ENCODE measurements at regions of chr19 and their contacts with region 1.

Region 1: DNA sequence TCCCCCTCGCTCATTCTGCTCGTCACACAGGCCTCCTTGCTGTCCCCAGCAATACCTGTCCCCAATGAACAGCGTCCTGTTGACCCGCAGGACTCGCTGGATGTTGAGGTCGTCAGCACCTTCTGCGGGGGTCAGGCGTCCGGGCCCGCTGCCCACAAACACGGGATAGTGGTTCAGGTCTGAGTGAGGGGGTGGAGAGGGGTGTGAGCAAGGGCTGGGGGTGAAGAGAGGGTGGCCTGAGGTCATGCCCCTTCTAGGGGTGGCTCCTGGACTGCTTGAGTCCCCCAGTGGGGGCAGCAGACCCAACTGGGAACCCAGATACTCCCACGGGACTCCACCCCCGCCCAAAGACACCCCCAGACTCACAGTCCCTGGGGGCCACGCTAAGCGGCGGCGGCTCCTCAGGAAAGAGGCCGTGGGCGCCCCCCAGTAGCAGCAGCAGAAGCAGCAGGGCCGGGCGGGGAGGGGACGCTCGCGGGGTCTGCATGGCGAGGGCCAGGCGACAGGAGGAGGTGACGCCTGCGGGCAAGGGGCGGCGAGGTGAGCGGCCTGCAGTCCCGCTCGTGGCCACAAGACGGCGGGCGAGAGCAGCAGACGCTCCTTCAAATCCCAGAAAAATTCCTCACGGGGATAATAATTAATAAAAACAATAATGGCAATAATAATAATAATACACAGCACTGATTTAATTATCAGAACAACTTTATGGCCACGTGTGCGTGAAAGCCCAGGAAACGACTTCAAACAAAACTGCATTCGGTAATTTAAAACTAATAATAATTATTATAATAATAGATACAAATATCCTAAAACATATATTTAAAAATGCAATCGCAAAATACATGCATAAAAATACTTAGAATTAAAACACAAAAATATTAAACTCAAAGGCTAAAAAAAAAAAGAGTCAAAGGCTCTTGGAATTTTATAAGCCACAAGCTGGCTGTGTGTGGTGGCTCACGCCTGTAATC is 1.2 kb downstream of the SEMA6B start:
- DNase-seq: peak; percentile 83
- H3K4me3 ChIP-seq: peak overlapping the region in 1 of 2 experiments; percentile 43; a peak in 1 of 4 replicates
- H3K27ac ChIP-seq: no peak overlapping the region
- H3K4me1 ChIP-seq: peaks cover 0 to 8% of the 10 kb centered on the region in 2 experiments; a peak in 1 of 4 replicates
- H3K27me3 ChIP-seq: no peaks in the 10 kb centered on the region
- CTCF ChIP-seq: peak; percentile 88
- EP300 ChIP-seq: no peak
- RAD21 ChIP-seq: peak; percentile 57

Region 2: GRCh38 chr19:4505897-4506744 is 52.1 kb before region 1 on chr19:
- CTCF ChIA-PET with region 1: no interaction called
- POLR2A ChIA-PET with region 1: no interaction called
- DNase-seq: no peak
- H3K4me3 ChIP-seq: no peak overlapping the region
- H3K27ac ChIP-seq: peak overlapping the region in 1 of 2 experiments; percentile 43; a peak in 1 of 4 replicates
- H3K4me1 ChIP-seq: 0 out of 4 replicates have a peak, but pooled peaks cover 0 to 7% of the 10 kb centered on the region in 2 experiments
- H3K27me3 ChIP-seq: no peaks in the 10 kb centered on the region
- CTCF ChIP-seq: no peak
- EP300 ChIP-seq: no peak
- RAD21 ChIP-seq: no peak

Region 3: GRCh38 chr19:4547303-4548237 is 10.7 kb before region 1 on chr19:
- CTCF ChIA-PET with region 1: interaction called, 14 read pairs
- POLR2A ChIA-PET with region 1: no interaction called
- DNase-seq: peak; percentile 59
- H3K4me3 ChIP-seq: no peak overlapping the region
- H3K27ac ChIP-seq: no peak overlapping the region
- H3K4me1 ChIP-seq: no peaks in the 10 kb centered on the region
- H3K27me3 ChIP-seq: peaks cover 10% of the 10 kb centered on the region
- CTCF ChIP-seq: peak; percentile 50
- EP300 ChIP-seq: no peak
- RAD21 ChIP-seq: no peak

Region 4: DNA sequence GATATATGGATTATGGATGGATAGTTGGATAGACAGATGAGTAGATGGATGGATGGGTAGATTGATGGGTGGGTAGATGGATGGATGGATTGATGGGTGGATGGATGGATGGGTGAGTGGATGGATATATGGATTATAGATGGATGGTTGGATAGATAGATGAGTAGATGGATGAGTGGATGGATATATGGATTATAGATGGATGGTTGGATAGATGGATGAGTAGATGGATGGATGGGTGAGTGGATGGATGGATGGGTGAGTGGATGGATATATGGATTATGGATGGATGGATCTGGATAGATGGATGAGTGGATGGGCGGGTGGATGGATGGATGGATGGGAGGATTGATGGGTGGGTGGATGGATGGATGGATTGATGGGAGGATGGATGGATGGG is 44.7 kb after region 1 on chr19:
- CTCF ChIA-PET with region 1: no interaction called
- POLR2A ChIA-PET with region 1: no interaction called
- DNase-seq: no peak
- H3K4me3 ChIP-seq: no peak overlapping the region
- H3K27ac ChIP-seq: no peak overlapping the region
- H3K4me1 ChIP-seq: peaks cover 0 to 5% of the 10 kb centered on the region in 2 experiments; a peak in 1 of 4 replicates
- H3K27me3 ChIP-seq: peaks cover 15% of the 10 kb centered on the region; the same call in 1 of the 2 replicates
- CTCF ChIP-seq: no peak
- EP300 ChIP-seq: no peak
- RAD21 ChIP-seq: no peak

Region 5: GRCh38 chr19:4647676-4648644 is 89.7 kb after region 1 on chr19:
- CTCF ChIA-PET with region 1: no interaction called
- POLR2A ChIA-PET with region 1: no interaction called
- DNase-seq: no peak
- H3K4me3 ChIP-seq: no peak overlapping the region; a peak in 1 of 4 replicates
- H3K27ac ChIP-seq: no peak overlapping the region
- H3K4me1 ChIP-seq: no peaks in the 10 kb centered on the region
- H3K27me3 ChIP-seq: no peaks in the 10 kb centered on the region
- CTCF ChIP-seq: no peak
- EP300 ChIP-seq: no peak
- RAD21 ChIP-seq: no peak

Measured in SK-N-SH (cell line).